ENCODE measurements at regions of chr1 and their contacts with region 1.

Region 1: DNA sequence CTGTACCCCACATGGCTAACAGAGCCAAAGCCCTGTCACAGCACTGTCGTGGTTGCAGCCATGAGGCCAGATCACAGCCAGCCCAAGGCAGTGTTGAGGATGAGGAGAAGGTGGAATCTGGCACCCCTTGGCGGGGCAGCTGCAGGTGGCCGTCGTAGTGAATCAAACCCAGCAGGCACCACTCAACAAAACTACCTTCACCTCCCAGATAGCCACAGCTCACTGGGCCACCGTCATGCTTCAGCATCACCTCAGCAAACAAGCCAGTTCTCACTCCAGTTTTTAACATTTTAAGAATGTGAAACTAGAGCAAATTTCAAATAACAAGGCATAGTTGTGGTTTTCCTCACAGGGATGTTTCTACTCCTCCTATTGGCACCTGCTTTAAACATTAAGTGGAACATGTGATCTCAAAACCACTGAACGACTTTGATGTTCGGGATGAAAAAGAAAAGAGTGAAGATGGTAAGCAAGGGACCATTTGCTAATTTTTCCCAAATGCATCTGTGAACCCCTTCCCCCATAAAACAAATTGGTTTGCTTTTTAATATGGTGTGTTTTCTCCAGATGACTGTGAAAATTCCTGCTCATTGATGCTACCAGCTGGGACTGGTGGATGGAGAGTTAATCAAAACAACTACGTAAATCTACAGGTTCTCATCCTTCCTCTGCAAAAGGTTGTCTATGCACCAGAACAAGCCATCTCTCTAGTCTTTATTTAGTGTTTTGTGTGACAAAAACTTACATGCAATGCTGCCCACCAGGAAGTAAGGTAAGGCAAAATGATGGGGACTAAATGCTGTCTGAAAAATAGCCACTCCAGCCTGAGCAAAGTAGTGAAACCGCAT is 45.5 kb downstream of the TOR1AIP2 start:
- DNase-seq: peak; percentile 20
- ATAC-seq: peak; percentile 58
- H3K4me3 Mint-ChIP-seq: no peak overlapping the region
- H3K27ac Mint-ChIP-seq: peak overlapping the region; percentile 11
- H3K4me1 Mint-ChIP-seq: peaks cover 24% of the 10 kb centered on the region
- H3K27me3 Mint-ChIP-seq: no peaks in the 10 kb centered on the region
- CTCF ChIP-seq: no peak

Region 2: GRCh38 chr1:179817789-179818188 is 14.3 kb before region 1 on chr1:
- CTCF ChIA-PET with region 1: interaction called, 28 read pairs
- POLR2A ChIA-PET with region 1: interaction called, 7 read pairs
- intact Hi-C with region 1: loop called (anchors 1 kb)
- DNase-seq: no peak
- ATAC-seq: no peak
- H3K4me3 Mint-ChIP-seq: no peak overlapping the region
- H3K27ac Mint-ChIP-seq: no peak overlapping the region
- H3K4me1 Mint-ChIP-seq: peaks cover 9% of the 10 kb centered on the region
- H3K27me3 Mint-ChIP-seq: no peaks in the 10 kb centered on the region
- CTCF ChIP-seq: no peak

Measured in activated CD8-positive, alpha-beta T cell treated with anti-CD3 and anti-CD28 coated beads for 36 hours (primary cell).